ENCODE measurements at regions of chr12 and their contacts with region 1.

Region 1: DNA sequence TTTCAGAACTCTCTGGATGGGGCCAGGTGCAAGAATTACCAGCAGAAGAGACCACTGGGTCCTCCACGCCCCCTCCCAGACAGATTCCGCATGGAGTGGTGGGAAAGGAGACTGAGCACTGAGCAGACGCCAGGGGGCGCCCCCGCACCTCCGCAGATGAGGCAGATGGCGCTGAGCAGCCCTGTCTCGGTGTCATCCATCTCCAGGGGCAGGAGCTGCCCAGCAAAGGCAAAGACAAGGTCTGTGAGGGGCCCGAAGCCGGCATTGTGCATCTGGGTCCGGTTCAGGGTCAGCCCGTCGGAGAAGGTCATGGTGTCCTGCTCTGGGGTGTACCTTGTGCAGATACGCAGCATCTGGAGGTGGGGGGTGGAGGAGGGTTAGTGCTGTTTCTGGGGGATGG is 6.3 kb upstream of the ITGB7 start:
- DNase-seq: no peak
- H3K4me3 ChIP-seq: no peak overlapping the region
- H3K27ac ChIP-seq: peak overlapping the region in 2 of 4 donors; percentile 26 to 99
- H3K4me1 ChIP-seq: peaks cover 54 to 65% (median 63%) of the 10 kb centered on the region in 4 donors
- H3K27me3 ChIP-seq: no peaks in the 10 kb centered on the region
- CTCF ChIP-seq: peak; percentile 94 to 95 (median 95)
- EP300 ChIP-seq: no peak
- POLR2A ChIP-seq: no peak

Region 2: GRCh38 chr12:53102883-53103807 is 110.2 kb before region 1 on chr12 and contains the start of gene SOAT2:
- intact Hi-C with region 1: no loop called
- DNase-seq: no peak
- H3K4me3 ChIP-seq: no peak within 1 kb of the TSS
- H3K27ac ChIP-seq: no peak within 1 kb of the TSS
- H3K4me1 ChIP-seq: peaks cover 17 to 53% (median 42%) of the 10 kb centered on the region in 4 donors
- H3K27me3 ChIP-seq: no peaks in the 10 kb centered on the region
- CTCF ChIP-seq: no peak
- EP300 ChIP-seq: no peak
- POLR2A ChIP-seq: no peak
- total RNA-seq, gene SOAT2: not detected

Region 3: DNA sequence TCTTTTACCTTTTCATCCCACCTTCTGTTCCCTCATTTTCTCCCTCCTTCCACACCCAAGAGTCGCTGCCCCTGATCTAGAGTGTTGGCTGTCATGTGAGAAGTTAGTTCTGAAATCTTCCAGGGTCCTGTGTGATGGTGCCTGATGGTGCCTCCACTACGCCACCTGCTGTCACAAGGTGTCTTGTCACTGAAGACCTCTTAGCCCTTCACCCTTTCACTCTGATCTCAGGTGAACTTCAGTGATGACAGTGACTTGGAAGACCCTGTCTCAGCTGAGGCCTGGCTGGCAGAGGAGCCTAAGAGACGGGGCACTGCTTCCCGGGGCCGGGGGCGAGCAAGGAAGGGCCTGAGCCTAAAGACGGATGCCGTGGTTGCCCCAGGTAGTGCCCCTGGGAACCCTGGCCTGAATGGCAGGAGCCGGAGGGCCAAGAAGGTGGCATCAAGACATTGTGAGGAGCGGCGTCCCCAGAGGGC is 74.4 kb after region 1 on chr12:
- intact Hi-C with region 1: loop called (anchors 2 kb)
- DNase-seq: no peak
- H3K4me3 ChIP-seq: no peak overlapping the region
- H3K27ac ChIP-seq: no peak overlapping the region
- H3K4me1 ChIP-seq: no peaks in the 10 kb centered on the region
- H3K27me3 ChIP-seq: no peaks in the 10 kb centered on the region
- CTCF ChIP-seq: peak; percentile 59 to 78 (median 64)
- EP300 ChIP-seq: no peak
- POLR2A ChIP-seq: no peak

Measured in esophagus muscularis mucosa (tissue), 4 donors.